Activated CD4-positive, alpha-beta memory T cell treated with anti-CD3 and anti-CD28 coated beads for 36 hours (primary cell): ENCODE measurements at regions of chr4 and their contacts with region 1.

Region 1: GRCh38 chr4:76301068-76301774 is 5.3 kb upstream of the STBD1 start:
- DNase-seq: peak; percentile 66
- H3K4me3 Mint-ChIP-seq: no peak overlapping the region
- H3K27ac Mint-ChIP-seq: no peak overlapping the region
- H3K4me1 Mint-ChIP-seq: peaks cover 35% of the 10 kb centered on the region
- H3K27me3 Mint-ChIP-seq: peaks cover 3% of the 10 kb centered on the region

Region 2: DNA sequence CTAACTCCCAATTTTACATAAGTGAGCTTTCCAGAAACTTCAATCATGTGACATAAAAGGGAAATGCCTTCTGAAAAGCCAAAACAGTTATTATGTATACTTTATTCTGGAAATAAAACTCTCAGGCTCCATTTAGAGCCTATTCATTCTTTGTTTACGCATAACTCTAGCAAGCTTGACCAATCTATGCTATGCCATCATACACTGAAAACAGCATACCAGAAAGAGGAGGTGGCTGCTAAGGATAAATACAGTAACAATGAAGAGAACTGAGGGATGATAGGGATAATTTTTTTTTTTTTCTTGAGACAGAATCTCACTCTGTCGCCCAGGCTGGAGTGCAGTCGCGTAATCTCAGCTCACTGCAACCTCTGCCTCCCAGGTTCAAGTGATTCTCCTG is 695.3 kb before region 1 on chr4:
- CTCF ChIA-PET with region 1: no interaction called
- POLR2A ChIA-PET with region 1: no interaction called
- intact Hi-C with region 1: no loop called
- DNase-seq: no peak
- H3K4me3 Mint-ChIP-seq: no peak overlapping the region
- H3K27ac Mint-ChIP-seq: no peak overlapping the region
- H3K4me1 Mint-ChIP-seq: no peaks in the 10 kb centered on the region
- H3K27me3 Mint-ChIP-seq: no peaks in the 10 kb centered on the region

Region 3: DNA sequence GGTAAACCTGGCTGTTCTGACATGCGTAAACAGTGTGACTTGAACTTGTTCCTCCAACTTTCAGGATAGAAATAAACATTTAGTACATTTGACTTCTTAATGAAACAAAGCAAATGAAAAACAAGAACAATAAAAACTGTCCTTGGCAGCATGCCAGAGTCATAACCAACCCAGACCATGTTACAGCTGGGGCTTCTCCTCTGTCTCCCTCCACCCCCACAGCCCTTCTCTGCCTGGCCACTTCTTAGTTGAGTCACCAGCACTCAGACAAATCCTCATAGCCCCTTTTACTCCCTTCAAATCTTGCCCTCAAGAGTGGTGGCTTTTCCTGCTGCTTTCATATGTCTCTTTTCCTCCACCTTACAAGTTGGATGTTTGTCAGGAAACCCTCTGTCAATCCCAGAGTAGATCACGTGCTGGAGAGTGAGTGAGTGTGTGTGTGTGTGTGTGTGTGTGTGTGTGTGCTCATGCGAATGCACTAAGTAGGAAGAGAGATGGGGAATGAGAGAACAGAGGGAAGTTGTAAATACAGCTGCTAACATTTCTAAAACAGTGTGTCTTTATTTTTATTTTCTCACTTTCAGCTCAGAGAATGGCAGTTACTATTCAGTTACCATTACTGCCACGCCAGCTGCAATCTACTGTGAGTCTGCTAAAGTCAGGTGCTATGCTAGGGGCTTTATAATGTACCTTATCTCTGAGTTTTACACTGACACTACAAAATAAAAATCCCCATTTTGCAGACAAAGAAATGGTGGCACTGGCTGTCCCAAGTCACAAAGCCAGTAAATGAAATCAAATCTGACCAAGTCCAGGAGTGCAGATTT is 102.6 kb before region 1 on chr4:
- CTCF ChIA-PET with region 1: interaction called, 5 read pairs
- POLR2A ChIA-PET with region 1: interaction called, 3 read pairs
- intact Hi-C with region 1: loop called (anchors 1 kb)
- DNase-seq: peak; percentile 73
- H3K4me3 Mint-ChIP-seq: no peak overlapping the region
- H3K27ac Mint-ChIP-seq: peak overlapping the region; percentile 20
- H3K4me1 Mint-ChIP-seq: peaks cover 44% of the 10 kb centered on the region
- H3K27me3 Mint-ChIP-seq: no peaks in the 10 kb centered on the region

Region 4: GRCh38 chr4:76213415-76214176 is 87.6 kb before region 1 on chr4 and contains the start of gene SCARB2:
- CTCF ChIA-PET with region 1: interaction called, 3 read pairs
- POLR2A ChIA-PET with region 1: no interaction called
- intact Hi-C with region 1: loop called (anchors 1 kb)
- DNase-seq: peak; percentile 75
- H3K4me3 Mint-ChIP-seq: peak within 1 kb of the TSS; percentile 70
- H3K27ac Mint-ChIP-seq: peak within 1 kb of the TSS; percentile 44
- H3K4me1 Mint-ChIP-seq: peaks cover 25% of the 10 kb centered on the region
- H3K27me3 Mint-ChIP-seq: no peaks in the 10 kb centered on the region
- total RNA-seq, gene SCARB2: 7.0 to 8.2 TPM

Region 5: GRCh38 chr4:76407440-76408119 is 106.4 kb after region 1 on chr4:
- CTCF ChIA-PET with region 1: no interaction called
- POLR2A ChIA-PET with region 1: no interaction called
- intact Hi-C with region 1: loop called (anchors 1 kb)
- DNase-seq: no peak
- H3K4me3 Mint-ChIP-seq: no peak overlapping the region
- H3K27ac Mint-ChIP-seq: no peak overlapping the region
- H3K4me1 Mint-ChIP-seq: peaks cover 4% of the 10 kb centered on the region
- H3K27me3 Mint-ChIP-seq: peaks cover 2% of the 10 kb centered on the region